Activated CD4-positive, alpha-beta T cell treated with anti-CD3 and anti-CD28 coated beads for 36 hours (primary cell): ENCODE measurements at regions of chr9 and their contacts with region 1.

Region 1: DNA sequence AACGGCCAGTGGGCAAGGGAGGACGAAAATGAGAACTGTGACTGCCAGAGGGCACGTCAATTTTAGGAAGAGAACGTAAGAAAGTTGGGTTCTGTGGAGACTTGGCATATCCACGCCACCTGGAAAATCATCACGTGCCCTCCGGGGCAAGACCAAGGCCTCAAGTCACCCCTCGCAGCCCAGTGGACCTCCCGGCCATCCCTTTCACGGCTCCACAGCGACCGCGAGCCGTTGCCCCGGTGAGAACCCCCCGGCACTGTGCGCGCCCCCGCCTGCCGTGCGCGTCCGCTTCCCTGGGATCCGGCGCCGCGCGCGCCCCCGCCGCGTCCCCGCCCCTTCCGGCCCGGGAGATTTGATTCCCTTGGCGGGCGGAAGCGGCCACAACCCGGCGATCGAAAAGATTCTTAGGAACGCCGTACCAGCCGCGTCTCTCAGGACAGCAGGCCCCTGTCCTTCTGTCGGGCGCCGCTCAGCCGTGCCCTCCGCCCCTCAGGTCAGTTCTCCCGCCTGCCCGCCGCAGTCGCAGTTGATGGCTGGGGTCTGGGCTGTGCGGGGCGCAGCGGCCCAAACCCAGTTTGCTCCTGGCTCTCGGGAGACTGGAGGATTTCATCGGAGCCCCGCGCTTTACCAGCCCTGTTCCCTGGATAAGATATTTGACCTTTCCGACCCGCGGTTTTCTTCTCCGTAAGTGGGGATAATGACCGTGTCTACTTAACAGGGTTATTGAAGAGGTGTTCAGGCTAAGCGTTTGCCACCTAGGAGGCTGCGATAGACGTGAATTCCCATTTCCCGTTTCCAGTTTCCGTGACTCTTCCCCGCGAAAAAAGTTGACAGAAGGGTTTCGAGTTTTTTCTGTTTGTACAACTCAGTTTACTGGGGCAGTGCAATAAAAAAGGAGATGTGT is at the start of gene MELK:
- DNase-seq: peak; percentile 89
- ATAC-seq: peak; percentile 73
- H3K4me3 Mint-ChIP-seq: peak within 1 kb of the TSS; percentile 97
- H3K27ac Mint-ChIP-seq: peak within 1 kb of the TSS; percentile 85
- H3K4me1 Mint-ChIP-seq: peaks cover 27% of the 10 kb centered on the region
- H3K27me3 Mint-ChIP-seq: no peaks in the 10 kb centered on the region
- total RNA-seq, gene MELK: 63.9 to 66.1 TPM

Region 2: GRCh38 chr9:36337865-36338264 is 234.9 kb before region 1 on chr9:
- CTCF ChIA-PET with region 1: no interaction called
- POLR2A ChIA-PET with region 1: no interaction called
- intact Hi-C with region 1: loop called in 1 of 2 experiments (anchors 5 kb)
- DNase-seq: no peak
- ATAC-seq: no peak
- H3K4me3 Mint-ChIP-seq: no peak overlapping the region
- H3K27ac Mint-ChIP-seq: peak overlapping the region; percentile 39
- H3K4me1 Mint-ChIP-seq: peaks cover 9% of the 10 kb centered on the region
- H3K27me3 Mint-ChIP-seq: no peaks in the 10 kb centered on the region

Region 3: DNA sequence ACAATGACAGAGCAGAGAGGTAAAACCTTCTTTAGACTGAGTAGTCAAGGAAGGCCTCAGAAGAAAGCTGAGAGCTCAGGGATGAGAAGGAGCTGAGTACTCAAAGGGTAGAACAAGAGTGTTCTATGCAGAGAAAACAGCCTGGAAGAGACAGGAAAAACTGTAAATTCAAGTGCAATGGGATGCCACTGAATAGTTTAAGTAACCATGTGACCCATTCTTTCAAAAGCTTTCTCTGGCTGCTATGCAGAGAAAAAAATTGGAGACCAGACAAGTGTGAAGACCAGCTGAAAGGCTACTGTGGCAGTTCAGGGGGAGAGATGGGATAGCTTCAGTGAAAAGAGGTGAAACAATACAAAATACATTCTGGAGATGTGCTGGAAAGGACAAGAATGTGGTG is 111.4 kb before region 1 on chr9:
- CTCF ChIA-PET with region 1: no interaction called
- POLR2A ChIA-PET with region 1: no interaction called
- intact Hi-C with region 1: loop called in 1 of 2 experiments (anchors 2 kb)
- DNase-seq: no peak
- ATAC-seq: no peak
- H3K4me3 Mint-ChIP-seq: no peak overlapping the region
- H3K27ac Mint-ChIP-seq: no peak overlapping the region
- H3K4me1 Mint-ChIP-seq: peaks cover 56% of the 10 kb centered on the region
- H3K27me3 Mint-ChIP-seq: no peaks in the 10 kb centered on the region

Region 4: GRCh38 chr9:36637491-36638270 is 64.9 kb after region 1 on chr9:
- CTCF ChIA-PET with region 1: no interaction called
- POLR2A ChIA-PET with region 1: no interaction called
- intact Hi-C with region 1: no loop called
- DNase-seq: no peak
- ATAC-seq: no peak
- H3K4me3 Mint-ChIP-seq: no peak overlapping the region
- H3K27ac Mint-ChIP-seq: no peak overlapping the region
- H3K4me1 Mint-ChIP-seq: peaks cover 4% of the 10 kb centered on the region
- H3K27me3 Mint-ChIP-seq: no peaks in the 10 kb centered on the region

Region 5: GRCh38 chr9:36765468-36766341 is 192.9 kb after region 1 on chr9:
- CTCF ChIA-PET with region 1: no interaction called
- POLR2A ChIA-PET with region 1: no interaction called
- intact Hi-C with region 1: loop called in 1 of 2 experiments (anchors 5 kb)
- DNase-seq: peak; percentile 95
- ATAC-seq: peak; percentile 99
- H3K4me3 Mint-ChIP-seq: no peak overlapping the region
- H3K27ac Mint-ChIP-seq: peak overlapping the region; percentile 16
- H3K4me1 Mint-ChIP-seq: peaks cover 2% of the 10 kb centered on the region
- H3K27me3 Mint-ChIP-seq: peaks cover 6% of the 10 kb centered on the region